Lower leg skin (tissue), 4 donors: ENCODE measurements at regions of chr22 and their contacts with region 1.

Region 1: DNA sequence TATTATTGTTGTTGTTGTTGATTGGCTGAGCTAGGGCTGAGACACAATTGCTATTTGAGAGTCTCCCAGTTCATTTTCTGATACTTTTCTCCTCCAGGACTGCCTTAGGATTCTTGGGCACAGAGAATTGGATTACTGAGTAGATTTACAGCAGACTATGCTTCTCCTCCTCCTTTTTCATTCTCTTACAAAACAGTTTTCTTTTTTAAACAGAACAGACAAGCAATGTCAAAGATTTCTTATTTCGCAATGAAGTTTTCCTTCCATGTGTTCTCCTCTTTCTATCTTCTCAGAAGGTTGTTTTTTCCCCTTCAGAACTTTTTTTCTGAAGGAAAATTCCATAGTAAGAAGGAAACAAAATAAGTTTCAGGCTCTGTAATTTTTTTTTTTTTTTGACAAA is 19.8 kb upstream of the TIMP3 start:
- DNase-seq: no peak
- H3K4me3 ChIP-seq: no peak overlapping the region
- CTCF ChIP-seq: no peak
- POLR2A ChIP-seq: no peak

Region 2: DNA sequence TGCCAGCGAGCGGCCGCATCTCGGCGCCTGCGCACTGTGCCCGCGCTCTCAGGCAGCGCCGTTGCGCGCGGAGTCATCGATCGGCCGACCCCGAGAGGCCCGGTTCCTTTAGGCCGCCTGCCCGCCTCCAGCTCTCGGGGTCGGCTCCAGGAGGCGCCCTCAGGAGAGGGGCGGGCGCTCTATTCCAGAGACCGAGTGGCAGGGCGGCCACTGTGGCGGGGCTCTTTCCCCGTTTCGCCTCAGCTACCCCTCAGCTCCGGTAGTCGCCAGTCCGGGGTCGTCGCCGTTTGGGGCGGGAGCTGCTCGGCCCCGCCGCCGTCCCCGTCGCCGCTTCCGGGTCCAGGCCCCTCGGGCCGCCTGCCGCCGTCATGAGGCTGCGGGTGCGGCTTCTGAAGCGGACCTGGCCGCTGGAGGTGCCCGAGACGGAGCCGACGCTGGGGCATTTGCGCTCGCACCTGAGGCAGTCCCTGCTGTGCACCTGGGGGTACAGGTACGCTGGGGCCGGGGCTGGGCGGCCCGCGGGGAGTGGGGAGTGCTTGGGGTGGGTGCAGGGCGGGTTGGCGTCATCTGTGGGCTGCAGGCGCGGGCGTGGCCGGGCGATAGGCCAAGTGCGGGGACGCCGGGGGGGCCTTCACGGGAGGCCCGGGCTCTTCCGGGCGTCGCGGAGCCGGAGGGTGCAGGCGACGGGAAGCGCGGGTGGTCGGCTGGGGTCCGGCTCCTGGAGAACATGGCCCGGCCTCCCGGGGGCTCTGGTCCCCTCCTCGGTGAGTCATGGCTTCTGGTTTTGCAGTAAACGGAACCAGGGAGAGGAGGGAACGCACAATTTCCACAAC is 306.8 kb before region 1 on chr22 and contains the start of gene FBXO7:
- intact Hi-C with region 1: no loop called
- DNase-seq: peak; percentile 86 to 98
- H3K4me3 ChIP-seq: peak within 1 kb of the TSS; percentile 90
- CTCF ChIP-seq: peak in 1 of 3 donors; percentile 13
- POLR2A ChIP-seq: peak in 1 of 2 donors; percentile 14
- total RNA-seq, gene FBXO7: 61.6 to 89.4 (median 80.6) TPM

Region 3: DNA sequence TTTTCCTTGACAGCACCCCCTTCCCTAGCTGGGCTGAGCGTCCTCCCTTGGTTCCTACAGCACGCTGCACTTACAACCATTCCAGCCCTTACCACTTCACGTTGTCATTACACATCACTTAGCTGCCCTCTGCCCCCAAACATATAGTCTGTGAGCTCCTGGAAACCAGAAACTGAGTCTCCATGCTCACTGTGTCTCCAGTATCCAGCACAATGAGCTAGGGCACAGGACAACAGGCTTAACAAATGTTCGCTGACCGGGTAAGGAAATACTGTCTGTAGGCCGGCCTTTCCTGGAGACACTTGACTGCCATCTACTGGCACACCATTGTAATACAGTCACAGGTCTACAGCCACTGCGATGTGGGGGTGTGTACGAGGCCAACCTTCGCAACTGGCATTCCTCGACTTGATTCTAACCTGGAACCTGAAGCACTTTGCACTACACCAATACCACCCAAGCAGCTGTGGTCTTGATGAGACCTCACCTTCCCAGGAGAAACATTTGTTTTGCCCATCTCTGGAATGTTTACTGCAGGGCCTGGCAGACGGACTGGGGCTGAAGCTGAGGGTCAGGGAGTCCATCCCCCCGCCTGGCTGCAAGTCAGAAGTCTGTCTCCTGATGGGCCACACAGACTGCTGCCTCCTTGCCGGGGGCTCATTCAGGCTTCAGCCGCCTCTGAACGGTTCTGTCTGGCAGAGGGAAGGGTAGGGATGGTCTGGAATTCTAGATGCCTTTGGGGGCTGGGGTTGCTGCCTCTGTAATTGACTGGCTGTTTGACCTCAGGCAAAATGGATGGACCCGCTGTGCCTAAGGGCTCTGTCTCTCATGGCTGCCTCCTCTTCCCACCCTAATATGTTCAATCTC is 204.4 kb after region 1 on chr22:
- intact Hi-C with region 1: no loop called
- DNase-seq: peak; percentile 81 to 91
- H3K4me3 ChIP-seq: no peak overlapping the region
- CTCF ChIP-seq: peak in 1 of 3 donors; percentile 58
- POLR2A ChIP-seq: no peak

Region 4: DNA sequence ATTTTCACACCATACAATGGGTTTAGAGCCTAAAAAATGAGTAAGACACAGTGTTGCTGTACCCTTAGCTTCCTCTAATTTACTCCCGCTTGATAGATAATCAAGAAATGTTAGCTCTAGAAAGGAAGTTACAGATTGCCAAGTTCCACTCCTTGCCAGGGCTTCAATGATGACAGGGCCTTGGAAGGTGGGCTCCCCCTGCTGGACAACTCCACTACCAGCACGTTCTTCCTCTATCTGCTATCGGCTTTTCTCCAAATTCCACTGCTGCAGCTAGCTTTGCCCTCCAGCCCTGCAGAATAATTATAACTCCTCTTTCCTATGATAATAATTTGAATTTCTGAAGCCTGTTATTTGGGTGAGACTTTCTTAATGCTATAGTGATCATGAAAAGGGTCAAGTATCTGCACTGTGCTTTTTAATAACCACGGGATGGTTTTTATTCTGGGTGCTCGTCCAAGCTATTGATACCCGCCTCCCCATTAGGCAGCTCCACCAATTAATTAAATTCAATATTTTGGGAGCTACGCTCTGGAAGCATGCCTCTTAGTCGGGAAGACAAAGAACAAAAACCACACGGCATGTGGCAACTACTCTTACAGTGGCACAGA is 267.5 kb after region 1 on chr22:
- intact Hi-C with region 1: loop called (anchors 5 kb)
- DNase-seq: peak; percentile 78 to 93
- H3K4me3 ChIP-seq: no peak overlapping the region
- CTCF ChIP-seq: peak in 1 of 3 donors; percentile 52
- POLR2A ChIP-seq: no peak